ENCODE measurements at regions of chr3 and their contacts with region 1.

Region 1: GRCh38 chr3:44913868-44914468 is 39.6 kb downstream of the TGM4 start:
- DNase-seq: no peak
- H3K4me3 ChIP-seq: no peak overlapping the region
- H3K27ac ChIP-seq: no peak overlapping the region
- H3K4me1 ChIP-seq: no peaks in the 10 kb centered on the region
- H3K27me3 ChIP-seq: peaks cover 0 to 11% (median 0%) of the 10 kb centered on the region in 3 donors
- CTCF ChIP-seq: peak in 3 of 4 experiments; percentile 46 to 76 (median 55)
- EP300 ChIP-seq: no peak
- POLR2A ChIP-seq: no peak

Region 2: DNA sequence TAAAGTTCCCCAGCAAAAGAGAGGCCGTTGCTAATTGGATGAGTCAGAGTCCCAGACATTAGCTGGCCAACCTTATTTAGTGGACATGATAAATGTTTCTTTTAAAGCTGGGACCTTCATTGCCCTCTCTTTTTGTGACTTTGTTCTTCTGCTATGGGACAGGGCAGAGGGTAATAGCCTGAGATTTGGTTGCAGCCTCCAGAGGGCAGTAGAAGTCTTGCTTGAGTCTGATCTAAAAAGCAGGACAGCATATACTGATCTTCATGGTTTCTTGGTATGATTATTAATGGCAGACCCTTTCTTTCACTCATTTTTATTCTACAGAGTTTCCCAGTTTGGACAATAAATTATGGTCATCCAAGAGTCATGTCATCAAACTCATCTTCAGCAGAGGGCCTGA is 384.0 kb before region 1 on chr3:
- intact Hi-C with region 1: loop called (anchors 5 kb)
- DNase-seq: no peak
- H3K4me3 ChIP-seq: no peak overlapping the region
- H3K27ac ChIP-seq: no peak overlapping the region
- H3K4me1 ChIP-seq: no peaks in the 10 kb centered on the region
- H3K27me3 ChIP-seq: peaks cover 0 to 17% (median 0%) of the 10 kb centered on the region in 3 donors
- CTCF ChIP-seq: no peak
- EP300 ChIP-seq: no peak
- POLR2A ChIP-seq: no peak

Measured in sigmoid colon (tissue), 7 donors.